Caco-2 (cell line): ENCODE measurements at regions of chr3 and their contacts with region 1.

Region 1: DNA sequence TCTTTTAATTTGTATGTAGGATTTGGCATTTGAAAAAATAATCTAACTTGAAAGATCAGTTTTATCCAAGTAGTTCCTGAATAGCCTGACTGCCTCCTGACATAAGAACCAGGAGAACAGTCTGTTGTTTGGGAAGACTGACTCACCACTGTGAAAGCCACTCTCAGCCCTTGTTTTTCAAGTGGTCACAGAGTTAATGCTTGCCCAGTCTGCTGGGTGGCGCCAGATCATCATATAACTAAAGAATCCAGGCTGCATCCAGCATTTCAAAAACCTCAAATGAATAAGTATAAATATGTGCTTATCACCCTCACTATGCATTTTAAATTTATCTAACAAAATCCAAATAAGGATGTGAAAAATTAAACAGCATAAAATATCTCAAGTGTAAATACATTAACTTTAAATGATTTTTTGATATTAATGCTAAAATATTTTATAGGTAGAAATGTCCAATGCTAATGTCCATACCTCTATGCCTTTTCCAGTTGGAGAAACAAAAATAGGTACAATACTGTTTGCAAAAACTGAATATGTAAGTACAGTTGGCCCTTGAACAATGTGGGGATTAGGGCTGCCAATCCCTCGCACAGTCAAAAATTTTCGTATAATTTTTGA is 26.9 kb upstream of the ZBBX start:
- DNase-seq: peak; percentile 42 to 43
- H3K4me3 ChIP-seq: no peak overlapping the region
- H3K4me3 Mint-ChIP-seq: no peak overlapping the region
- H3K27ac Mint-ChIP-seq: no peak overlapping the region
- H3K4me1 ChIP-seq: no peaks in the 10 kb centered on the region
- H3K4me1 Mint-ChIP-seq: peaks cover 5% of the 10 kb centered on the region
- H3K27me3 ChIP-seq: no peaks in the 10 kb centered on the region
- H3K27me3 Mint-ChIP-seq: no peaks in the 10 kb centered on the region
- CTCF ChIP-seq: peak; percentile 35 to 74

Region 2: DNA sequence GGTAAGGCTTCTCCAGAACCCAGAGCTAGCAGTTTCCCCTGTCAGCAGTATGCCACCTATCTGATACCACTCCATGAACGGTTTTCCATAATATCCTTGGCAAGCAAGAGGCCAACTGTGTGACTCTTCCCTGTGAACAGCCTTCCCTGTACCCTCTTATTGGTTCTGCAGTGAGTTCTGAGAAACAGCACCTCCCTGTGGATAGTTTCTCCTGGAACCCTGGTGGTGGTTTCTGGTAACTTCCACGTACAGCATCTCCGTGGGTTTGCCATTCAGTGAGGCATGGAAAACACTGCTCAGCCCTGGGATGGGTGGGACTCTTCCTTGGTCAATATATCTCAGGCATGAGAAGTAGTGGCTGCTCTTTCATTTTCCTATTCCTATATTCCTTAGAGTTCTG is 86.3 kb after region 1 on chr3:
- CTCF ChIA-PET with region 1: no interaction called
- POLR2A ChIA-PET with region 1: no interaction called
- intact Hi-C with region 1: loop called (anchors 1 kb)
- DNase-seq: peak in 1 of 2 experiments; percentile 28
- H3K4me3 ChIP-seq: no peak overlapping the region
- H3K4me3 Mint-ChIP-seq: no peak overlapping the region
- H3K27ac Mint-ChIP-seq: no peak overlapping the region
- H3K4me1 ChIP-seq: no peaks in the 10 kb centered on the region
- H3K4me1 Mint-ChIP-seq: no peaks in the 10 kb centered on the region
- H3K27me3 ChIP-seq: no peaks in the 10 kb centered on the region
- H3K27me3 Mint-ChIP-seq: peaks cover 3% of the 10 kb centered on the region
- CTCF ChIP-seq: peak; percentile 51 to 82

Region 3: DNA sequence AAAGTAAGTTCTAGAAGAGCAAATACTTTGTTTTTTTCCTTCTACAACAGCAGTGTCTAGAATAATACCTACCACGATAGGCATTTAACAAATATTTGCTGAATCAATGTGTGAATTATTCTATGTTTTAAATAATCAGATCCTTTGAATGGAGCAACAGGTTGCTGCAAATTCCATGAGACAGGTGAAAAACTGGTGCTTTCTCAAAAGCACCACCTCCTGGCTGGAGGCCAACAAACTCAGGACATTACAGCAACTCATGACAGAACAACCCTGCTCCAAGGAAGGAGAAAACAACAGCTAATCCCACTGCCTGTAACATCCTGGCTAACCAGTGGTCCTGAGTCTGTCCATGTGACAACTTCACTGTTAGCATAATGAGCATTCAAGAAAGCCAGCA is 132.9 kb after region 1 on chr3:
- CTCF ChIA-PET with region 1: no interaction called
- POLR2A ChIA-PET with region 1: no interaction called
- intact Hi-C with region 1: loop called (anchors 1 kb)
- DNase-seq: no peak
- H3K4me3 ChIP-seq: no peak overlapping the region
- H3K4me3 Mint-ChIP-seq: no peak overlapping the region
- H3K27ac Mint-ChIP-seq: no peak overlapping the region
- H3K4me1 ChIP-seq: no peaks in the 10 kb centered on the region
- H3K4me1 Mint-ChIP-seq: no peaks in the 10 kb centered on the region
- H3K27me3 ChIP-seq: no peaks in the 10 kb centered on the region
- H3K27me3 Mint-ChIP-seq: peaks cover 8% of the 10 kb centered on the region
- CTCF ChIP-seq: no peak

Region 4: DNA sequence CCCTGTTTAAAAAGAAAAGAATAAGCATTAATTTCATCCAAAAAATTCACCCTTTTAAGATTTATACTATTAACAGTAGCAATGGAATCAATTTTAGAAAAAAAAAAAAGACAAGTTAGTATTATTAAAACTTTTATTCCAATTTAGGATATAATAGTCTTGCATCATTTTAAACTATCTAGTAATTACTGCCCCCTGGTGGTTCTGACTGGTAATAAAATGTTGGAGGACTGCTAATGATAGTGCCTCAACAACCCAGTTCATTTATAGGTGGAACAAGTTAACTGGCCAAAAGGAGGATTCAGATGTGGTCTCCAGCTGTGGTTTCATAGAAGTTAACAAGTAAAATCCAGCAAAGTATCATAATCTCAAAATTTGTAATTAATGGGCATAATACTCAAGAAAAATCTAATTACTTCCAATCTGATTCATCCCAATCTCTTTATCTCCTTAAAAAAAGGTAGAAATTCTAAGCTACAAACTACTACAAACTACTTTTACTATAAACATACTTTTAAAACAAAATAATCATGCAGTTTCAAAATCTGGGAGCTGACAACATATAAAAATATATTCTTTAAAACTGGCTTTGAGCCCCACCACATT is 277.5 kb after region 1 on chr3:
- CTCF ChIA-PET with region 1: no interaction called
- POLR2A ChIA-PET with region 1: no interaction called
- intact Hi-C with region 1: loop called (anchors 1 kb)
- DNase-seq: peak; percentile 41 to 73
- H3K4me3 ChIP-seq: no peak overlapping the region
- H3K4me3 Mint-ChIP-seq: no peak overlapping the region
- H3K27ac Mint-ChIP-seq: no peak overlapping the region
- H3K4me1 ChIP-seq: no peaks in the 10 kb centered on the region
- H3K4me1 Mint-ChIP-seq: peaks cover 5% of the 10 kb centered on the region
- H3K27me3 ChIP-seq: no peaks in the 10 kb centered on the region
- H3K27me3 Mint-ChIP-seq: no peaks in the 10 kb centered on the region
- CTCF ChIP-seq: peak; percentile 64

Region 5: DNA sequence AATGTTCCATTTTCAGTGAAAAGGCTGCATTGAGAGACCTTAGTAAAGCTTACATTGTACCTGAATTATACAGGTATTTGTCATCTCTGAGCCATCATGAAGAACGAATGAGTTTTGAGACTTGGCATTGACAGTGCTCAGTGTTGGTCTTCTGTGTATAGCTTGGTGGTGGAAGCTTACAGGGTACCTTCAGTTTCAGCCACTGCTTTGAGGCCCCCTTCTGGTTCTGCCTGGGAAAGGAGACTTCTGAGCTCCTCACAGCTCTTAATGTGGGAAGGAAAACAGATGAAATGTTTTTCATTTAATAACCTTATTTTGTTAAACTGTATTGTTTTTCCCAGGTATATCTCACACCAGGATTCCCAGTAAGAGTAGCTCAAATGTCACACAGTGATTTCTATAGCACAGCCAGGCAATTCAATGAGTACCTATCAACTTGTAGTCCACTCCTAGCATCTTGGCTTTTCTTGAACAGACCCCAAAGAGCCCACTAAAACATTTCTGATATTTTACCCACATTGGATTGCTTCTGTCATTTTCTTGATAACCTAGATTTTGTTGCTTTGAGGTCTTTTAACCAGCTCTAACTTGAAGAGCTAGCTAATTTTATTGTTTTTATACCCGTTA is 334.1 kb after region 1 on chr3:
- CTCF ChIA-PET with region 1: no interaction called
- POLR2A ChIA-PET with region 1: no interaction called
- intact Hi-C with region 1: loop called (anchors 1 kb)
- DNase-seq: peak; percentile 43 to 55
- H3K4me3 ChIP-seq: no peak overlapping the region
- H3K4me3 Mint-ChIP-seq: no peak overlapping the region
- H3K27ac Mint-ChIP-seq: no peak overlapping the region
- H3K4me1 ChIP-seq: no peaks in the 10 kb centered on the region
- H3K4me1 Mint-ChIP-seq: peaks cover 6% of the 10 kb centered on the region
- H3K27me3 ChIP-seq: no peaks in the 10 kb centered on the region
- H3K27me3 Mint-ChIP-seq: no peaks in the 10 kb centered on the region
- CTCF ChIP-seq: peak; percentile 36 to 85